ENCODE measurements at regions of chr7 and their contacts with region 1.

Region 1: DNA sequence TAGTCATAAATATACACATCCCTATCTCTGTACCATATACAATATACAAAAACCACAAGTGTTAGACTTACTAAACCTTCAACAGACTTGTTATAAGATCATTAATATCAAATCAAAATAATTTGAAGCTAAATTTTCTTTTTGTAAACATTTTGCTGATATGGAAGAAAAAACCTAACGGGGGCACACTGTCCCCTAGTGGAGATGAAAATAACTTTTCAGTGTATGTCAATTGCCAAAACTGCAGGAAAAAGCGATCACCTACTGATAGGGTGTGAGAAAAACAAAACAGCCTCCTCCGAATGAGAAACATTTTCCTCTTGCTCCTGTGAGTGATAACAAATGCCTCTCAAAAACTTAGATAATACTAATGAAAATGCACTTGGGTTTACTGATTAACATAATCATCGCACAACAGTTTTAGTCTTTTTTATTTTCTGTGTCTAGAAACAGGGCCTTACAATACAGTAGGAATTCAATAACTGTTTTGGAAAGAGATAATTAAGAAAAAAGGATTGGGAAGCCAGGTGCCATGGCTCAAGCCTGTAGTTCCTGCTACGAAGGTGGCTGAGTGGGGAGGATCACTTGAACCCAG is 322.7 kb downstream of the CRPPA start:
- DNase-seq: peak; percentile 16
- ATAC-seq: peak; percentile 59
- H3K4me3 ChIP-seq: no peak overlapping the region
- H3K27ac ChIP-seq: no peak overlapping the region
- H3K4me1 ChIP-seq: no peaks in the 10 kb centered on the region
- H3K27me3 ChIP-seq: no peaks in the 10 kb centered on the region
- CTCF ChIP-seq: peak; percentile 76
- POLR2A ChIP-seq: no peak
- RAD21 ChIP-seq: peak; percentile 67

Region 2: GRCh38 chr7:16078076-16078952 is 20.4 kb before region 1 on chr7:
- CTCF ChIA-PET with region 1: interaction called, 7 read pairs
- POLR2A ChIA-PET with region 1: no interaction called
- dilution Hi-C with region 1: no loop called
- in situ Hi-C with region 1: no loop called
- intact Hi-C with region 1: loop called (anchors 1 kb)
- DNase-seq: peak; percentile 64
- ATAC-seq: peak; percentile 82
- H3K4me3 ChIP-seq: no peak overlapping the region
- H3K27ac ChIP-seq: no peak overlapping the region
- H3K4me1 ChIP-seq: no peaks in the 10 kb centered on the region
- H3K27me3 ChIP-seq: no peaks in the 10 kb centered on the region
- CTCF ChIP-seq: peak; percentile 70
- POLR2A ChIP-seq: no peak
- RAD21 ChIP-seq: peak; percentile 69

Region 3: GRCh38 chr7:16178092-16178491 is 79.4 kb after region 1 on chr7:
- CTCF ChIA-PET with region 1: no interaction called
- POLR2A ChIA-PET with region 1: no interaction called
- dilution Hi-C with region 1: no loop called
- in situ Hi-C with region 1: no loop called
- intact Hi-C with region 1: no loop called
- DNase-seq: no peak
- ATAC-seq: no peak
- H3K4me3 ChIP-seq: no peak overlapping the region
- H3K27ac ChIP-seq: no peak overlapping the region
- H3K4me1 ChIP-seq: no peaks in the 10 kb centered on the region
- H3K27me3 ChIP-seq: no peaks in the 10 kb centered on the region
- CTCF ChIP-seq: no peak
- POLR2A ChIP-seq: no peak
- RAD21 ChIP-seq: no peak

Measured in IMR-90 (cell line).